ENCODE measurements at regions of chr6 and their contacts with region 1.

Region 1: GRCh38 chr6:4008324-4009047 is 70.5 kb downstream of the FAM217A start:
- DNase-seq: peak in 2 of 9 experiments; percentile 69 to 77
- ATAC-seq: peak; percentile 85
- H3K4me3 ChIP-seq: no peak overlapping the region
- H3K4me3 Mint-ChIP-seq: no peak overlapping the region
- H3K27ac ChIP-seq: no peak overlapping the region
- H3K27ac Mint-ChIP-seq: peak overlapping the region; percentile 81
- H3K4me1 ChIP-seq: peaks cover 36% of the 10 kb centered on the region
- H3K4me1 Mint-ChIP-seq: peaks cover 60% of the 10 kb centered on the region
- H3K27me3 ChIP-seq: no peaks in the 10 kb centered on the region
- H3K27me3 Mint-ChIP-seq: no peaks in the 10 kb centered on the region
- CTCF ChIP-seq: peak; percentile 62

Region 2: DNA sequence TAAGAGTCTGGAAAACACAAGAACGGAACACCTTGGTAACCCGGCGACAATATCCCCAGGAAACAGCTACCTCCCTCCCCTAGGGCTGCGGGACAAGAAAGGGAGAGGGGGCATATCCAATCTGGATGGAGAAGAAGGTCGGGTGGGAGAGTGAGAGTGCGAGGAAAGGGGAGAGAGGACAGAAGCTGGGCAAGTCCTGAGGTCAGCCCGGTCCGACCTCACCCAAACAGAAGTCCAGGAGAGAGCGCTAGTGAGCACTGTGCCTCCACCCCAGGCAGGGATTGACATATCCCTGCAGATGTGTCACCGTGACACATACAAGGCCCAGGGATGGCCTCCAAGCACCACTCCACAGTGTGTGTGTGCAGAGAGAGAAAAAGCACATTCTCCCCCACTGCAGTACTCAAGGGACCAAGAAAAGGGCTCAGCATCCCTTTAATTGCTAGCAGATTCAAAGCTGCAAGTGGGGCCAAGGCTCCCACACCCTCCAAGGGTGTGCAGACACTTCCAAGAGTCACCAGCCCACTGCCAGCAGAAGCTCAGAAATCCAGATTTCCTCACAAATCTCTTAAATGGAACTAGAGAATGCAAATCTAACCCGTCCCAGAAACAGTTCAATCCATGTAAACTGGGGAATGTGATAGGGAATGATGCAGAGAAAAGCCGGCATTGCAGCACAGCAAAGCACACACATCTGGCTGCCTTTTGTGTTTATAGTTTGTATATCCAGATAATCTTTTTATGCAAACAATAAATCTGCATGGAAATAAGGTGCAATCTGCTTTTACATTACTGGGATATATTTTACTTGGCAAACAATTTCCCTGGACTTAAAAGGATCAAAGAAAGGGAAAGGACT is 260.0 kb before region 1 on chr6:
- CTCF ChIA-PET with region 1: interaction called, 26 read pairs
- POLR2A ChIA-PET with region 1: no interaction called
- intact Hi-C with region 1: loop called (anchors 1 to 2 kb)
- DNase-seq: peak in 3 of 9 experiments; percentile 36 to 45 (median 37)
- ATAC-seq: no peak
- H3K4me3 ChIP-seq: no peak overlapping the region
- H3K4me3 Mint-ChIP-seq: no peak overlapping the region
- H3K27ac ChIP-seq: no peak overlapping the region
- H3K27ac Mint-ChIP-seq: no peak overlapping the region
- H3K4me1 ChIP-seq: peaks cover 4% of the 10 kb centered on the region
- H3K4me1 Mint-ChIP-seq: peaks cover 9% of the 10 kb centered on the region
- H3K27me3 ChIP-seq: peaks cover 11 to 21% of the 10 kb centered on the region in 2 experiments
- H3K27me3 Mint-ChIP-seq: peaks cover 32% of the 10 kb centered on the region
- CTCF ChIP-seq: peak; percentile 25

Region 3: DNA sequence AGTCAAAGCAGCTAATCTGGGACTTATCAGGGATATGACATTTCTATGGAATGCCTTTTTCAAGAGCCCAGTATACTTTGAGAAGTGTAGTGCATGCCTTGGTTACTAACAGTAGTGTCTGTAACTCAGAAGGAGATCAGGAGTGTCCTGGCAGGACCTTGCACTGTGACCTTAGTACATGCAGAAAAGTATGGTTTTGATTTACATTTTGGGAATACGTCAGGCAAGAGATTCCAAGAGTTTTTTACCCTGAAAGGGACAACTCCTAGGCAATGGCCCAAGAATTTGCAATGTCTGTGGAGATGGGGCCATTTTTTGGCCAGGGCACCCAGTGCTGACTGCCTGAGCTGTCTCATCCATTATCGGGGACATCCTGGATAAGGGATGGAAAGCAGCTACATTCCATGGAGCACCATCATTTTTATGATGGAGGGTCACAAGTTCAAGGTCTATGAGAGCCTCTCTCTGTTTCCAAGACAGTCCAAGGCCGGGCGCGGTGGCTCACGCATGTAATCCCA is 79.1 kb before region 1 on chr6:
- CTCF ChIA-PET with region 1: interaction called, 14 read pairs
- POLR2A ChIA-PET with region 1: no interaction called
- intact Hi-C with region 1: loop called in 1 of 2 experiments (anchors 2 kb)
- DNase-seq: no peak
- ATAC-seq: no peak
- H3K4me3 ChIP-seq: no peak overlapping the region
- H3K4me3 Mint-ChIP-seq: no peak overlapping the region
- H3K27ac ChIP-seq: no peak overlapping the region
- H3K27ac Mint-ChIP-seq: no peak overlapping the region
- H3K4me1 ChIP-seq: no peaks in the 10 kb centered on the region
- H3K4me1 Mint-ChIP-seq: no peaks in the 10 kb centered on the region
- H3K27me3 ChIP-seq: no peaks in the 10 kb centered on the region
- H3K27me3 Mint-ChIP-seq: peaks cover 10% of the 10 kb centered on the region
- CTCF ChIP-seq: no peak

Region 4: DNA sequence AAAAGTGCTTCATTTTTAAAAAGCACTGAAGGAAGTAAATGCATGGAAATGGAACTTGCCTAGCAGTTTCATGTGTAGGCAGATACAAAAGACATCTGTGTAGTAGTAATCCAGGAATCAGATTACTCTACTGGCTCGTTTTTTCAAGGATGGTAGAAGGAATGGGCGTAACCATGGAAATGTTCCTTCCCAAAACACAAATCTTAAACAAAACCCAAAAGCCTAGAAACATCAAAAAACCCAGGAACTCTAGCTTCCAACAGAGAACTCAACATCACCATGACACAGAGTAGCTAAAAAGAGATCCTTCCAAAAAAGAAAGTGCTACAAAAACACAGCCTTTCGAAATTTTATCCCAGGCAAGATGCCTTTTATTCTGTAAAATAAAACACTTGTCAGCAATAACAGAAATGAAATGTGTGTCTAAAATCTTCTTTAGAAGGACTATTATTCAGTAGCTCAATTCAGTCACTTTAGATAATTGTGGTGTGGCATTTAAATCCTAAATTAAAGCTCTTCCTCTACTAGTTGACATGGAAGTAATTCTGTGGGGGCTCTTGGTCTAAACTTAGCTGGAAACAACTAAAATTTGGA is 11.2 kb before region 1 on chr6:
- CTCF ChIA-PET with region 1: interaction called, 14 read pairs
- POLR2A ChIA-PET with region 1: no interaction called
- intact Hi-C with region 1: no loop called
- DNase-seq: no peak
- ATAC-seq: no peak
- H3K4me3 ChIP-seq: no peak overlapping the region
- H3K4me3 Mint-ChIP-seq: no peak overlapping the region
- H3K27ac ChIP-seq: no peak overlapping the region
- H3K27ac Mint-ChIP-seq: no peak overlapping the region
- H3K4me1 ChIP-seq: no peaks in the 10 kb centered on the region
- H3K4me1 Mint-ChIP-seq: peaks cover 35% of the 10 kb centered on the region
- H3K27me3 ChIP-seq: no peaks in the 10 kb centered on the region
- H3K27me3 Mint-ChIP-seq: no peaks in the 10 kb centered on the region
- CTCF ChIP-seq: no peak

Region 5: DNA sequence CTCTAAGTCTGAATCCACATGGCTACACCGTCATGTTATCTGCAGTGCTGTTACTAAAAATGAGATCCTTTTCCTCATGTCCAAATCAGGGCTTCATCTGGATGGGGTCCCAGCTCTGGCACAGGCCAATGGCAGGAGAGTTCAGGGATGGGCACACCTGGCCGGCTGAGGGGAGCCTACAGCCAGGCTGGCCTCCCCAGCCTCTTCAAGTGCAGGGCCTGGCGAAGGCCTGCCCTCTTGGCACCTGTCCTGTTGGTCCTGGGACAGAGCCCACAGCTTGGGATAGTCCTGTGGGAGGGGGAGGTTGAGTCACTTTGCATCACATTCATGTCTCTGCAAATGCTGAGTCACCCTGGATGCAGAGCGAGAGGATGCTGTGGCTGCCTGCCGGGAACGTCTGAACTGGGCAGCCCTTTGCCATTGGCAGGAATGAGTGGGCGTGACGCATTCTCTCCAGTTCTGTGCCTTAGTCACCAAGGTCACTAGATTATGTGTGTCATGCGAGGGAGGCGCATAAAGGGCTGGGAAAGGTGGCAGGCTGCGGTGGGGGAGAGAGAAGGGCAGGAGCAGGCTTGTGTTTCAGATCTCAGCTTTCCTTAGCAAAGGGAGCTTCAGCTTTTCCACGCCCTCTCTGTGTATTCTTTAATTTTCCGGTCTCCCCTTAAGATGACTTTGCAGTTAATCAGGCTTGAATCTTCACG is 350.1 kb after region 1 on chr6:
- CTCF ChIA-PET with region 1: no interaction called
- POLR2A ChIA-PET with region 1: no interaction called
- intact Hi-C with region 1: no loop called
- DNase-seq: no peak
- ATAC-seq: no peak
- H3K4me3 ChIP-seq: no peak overlapping the region
- H3K4me3 Mint-ChIP-seq: no peak overlapping the region
- H3K27ac ChIP-seq: no peak overlapping the region
- H3K27ac Mint-ChIP-seq: no peak overlapping the region
- H3K4me1 ChIP-seq: no peaks in the 10 kb centered on the region
- H3K4me1 Mint-ChIP-seq: no peaks in the 10 kb centered on the region
- H3K27me3 ChIP-seq: no peaks in the 10 kb centered on the region
- H3K27me3 Mint-ChIP-seq: peaks cover 12% of the 10 kb centered on the region
- CTCF ChIP-seq: no peak

Measured in CD8-positive, alpha-beta T cell (primary cell).